ENCODE measurements at regions of chrX and their contacts with region 1.

Region 1: DNA sequence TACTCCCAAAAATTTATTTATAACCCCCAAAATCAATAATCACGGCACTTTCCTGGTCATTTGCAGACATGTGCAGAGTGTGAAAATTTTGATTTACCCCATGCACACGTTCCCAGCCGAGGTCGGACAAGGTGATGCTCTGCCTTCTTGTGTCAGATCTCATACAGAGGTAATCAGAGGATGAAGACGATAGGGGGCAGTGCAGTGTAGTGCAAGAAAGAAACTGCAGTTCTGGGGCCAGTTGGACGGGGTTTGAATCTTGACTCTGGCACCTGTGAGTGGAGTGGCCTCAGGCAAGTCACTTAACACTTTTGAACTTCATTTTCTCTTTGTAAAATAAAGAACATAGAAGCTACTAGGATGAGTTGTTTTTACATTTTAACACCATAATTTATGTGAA is 88.4 kb downstream of the FRMPD3 start:
- DNase-seq: peak; percentile 40 to 52
- H3K4me3 ChIP-seq: no peak overlapping the region
- H3K27ac ChIP-seq: no peak overlapping the region
- H3K4me1 ChIP-seq: peaks cover 3% of the 10 kb centered on the region; the same call in 1 of the 2 replicates
- H3K27me3 ChIP-seq: no peaks in the 10 kb centered on the region
- CTCF ChIP-seq: peak; percentile 88

Region 2: GRCh38 chrX:107171369-107172102 is 366.3 kb before region 1 on chrX:
- CTCF ChIA-PET with region 1: no interaction called
- POLR2A ChIA-PET with region 1: no interaction called
- intact Hi-C with region 1: no loop called
- DNase-seq: no peak
- H3K4me3 ChIP-seq: no peak overlapping the region
- H3K27ac ChIP-seq: no peak overlapping the region
- H3K4me1 ChIP-seq: no peaks in the 10 kb centered on the region
- H3K27me3 ChIP-seq: no peaks in the 10 kb centered on the region
- CTCF ChIP-seq: no peak

Region 3: GRCh38 chrX:107562482-107562881 is 24.7 kb after region 1 on chrX:
- CTCF ChIA-PET with region 1: interaction called, 3 read pairs
- POLR2A ChIA-PET with region 1: interaction called, 26 read pairs
- intact Hi-C with region 1: no loop called
- DNase-seq: peak; percentile 42 to 79
- H3K4me3 ChIP-seq: no peak overlapping the region
- H3K27ac ChIP-seq: no peak overlapping the region
- H3K4me1 ChIP-seq: peaks cover 28% of the 10 kb centered on the region
- H3K27me3 ChIP-seq: no peaks in the 10 kb centered on the region
- CTCF ChIP-seq: no peak

Region 4: GRCh38 chrX:107601759-107602158 is 63.9 kb after region 1 on chrX:
- CTCF ChIA-PET with region 1: interaction called, 11 read pairs
- POLR2A ChIA-PET with region 1: no interaction called
- intact Hi-C with region 1: no loop called
- DNase-seq: no peak
- H3K4me3 ChIP-seq: no peak overlapping the region
- H3K27ac ChIP-seq: no peak overlapping the region
- H3K4me1 ChIP-seq: peaks cover 11% of the 10 kb centered on the region
- H3K27me3 ChIP-seq: no peaks in the 10 kb centered on the region
- CTCF ChIP-seq: no peak

Region 5: GRCh38 chrX:108285356-108285755 is 747.5 kb after region 1 on chrX:
- CTCF ChIA-PET with region 1: no interaction called
- POLR2A ChIA-PET with region 1: no interaction called
- intact Hi-C with region 1: no loop called
- DNase-seq: no peak
- H3K4me3 ChIP-seq: no peak overlapping the region
- H3K27ac ChIP-seq: no peak overlapping the region
- H3K4me1 ChIP-seq: no peaks in the 10 kb centered on the region
- H3K27me3 ChIP-seq: no peaks in the 10 kb centered on the region
- CTCF ChIP-seq: no peak

Measured in PC-9 (cell line).